ENCODE measurements at regions of chr2 and their contacts with region 1.

Region 1: GRCh38 chr2:69914170-69914960 is 544 bp upstream of the MXD1 start:
- DNase-seq: peak; percentile 99 to 100 (median 100)
- H3K4me3 ChIP-seq: peak overlapping the region; percentile 81 to 88
- H3K4me3 Mint-ChIP-seq: peak overlapping the region; percentile 85 to 89 (median 87)
- H3K27ac ChIP-seq: peak overlapping the region; percentile 96
- H3K27ac Mint-ChIP-seq: peak overlapping the region; percentile 90 to 96 (median 94)
- H3K4me1 ChIP-seq: peaks cover 30% of the 10 kb centered on the region
- H3K4me1 Mint-ChIP-seq: peaks cover 7 to 44% (median 19%) of the 10 kb centered on the region in 4 donors
- H3K27me3 ChIP-seq: no peaks in the 10 kb centered on the region
- H3K27me3 Mint-ChIP-seq: no peaks in the 10 kb centered on the region

Region 2: DNA sequence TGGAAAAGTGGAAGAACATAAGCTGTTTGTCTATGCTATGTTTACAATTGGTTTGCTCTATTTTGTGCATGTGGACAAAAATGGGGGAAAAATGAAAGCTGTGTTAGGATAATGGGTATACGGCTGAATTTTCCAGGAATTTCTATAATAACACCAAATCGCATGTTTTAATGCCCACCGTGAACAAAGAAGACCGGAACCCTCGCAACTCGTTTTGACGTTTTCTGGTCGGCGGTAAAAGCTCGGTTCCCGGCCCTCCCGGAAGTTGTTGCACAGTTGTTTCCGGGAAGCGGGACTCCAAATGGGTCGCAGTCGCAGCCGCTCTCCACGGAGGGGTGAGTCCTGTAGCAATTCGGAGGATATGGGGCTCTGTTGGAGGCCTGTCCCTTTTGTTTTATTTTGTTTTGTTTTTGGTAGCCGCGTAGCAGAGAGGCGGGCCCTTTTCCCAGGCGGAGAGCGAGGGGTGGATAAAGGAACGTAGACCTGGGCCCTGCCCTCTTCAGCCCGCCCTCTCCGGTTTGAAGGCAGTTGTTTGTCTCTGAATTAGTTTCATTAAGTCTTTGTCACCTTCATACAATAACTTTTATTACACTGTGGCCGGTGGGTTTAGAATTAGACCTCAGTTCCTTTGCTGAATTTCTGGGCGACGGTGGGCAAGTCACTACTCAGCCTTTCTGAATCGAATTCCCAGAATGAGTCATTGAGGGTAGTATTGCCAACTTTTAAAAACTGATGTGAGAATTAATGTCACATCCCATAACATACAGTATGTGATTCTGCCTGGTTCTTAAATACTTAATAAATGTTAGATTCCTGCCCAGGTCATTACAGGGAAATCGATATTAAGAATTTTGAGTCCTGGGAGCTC is 20.4 kb before region 1 on chr2 and contains the start of gene SNRNP27:
- CTCF ChIA-PET with region 1: interaction called, 5 read pairs
- POLR2A ChIA-PET with region 1: interaction called, 31 read pairs
- intact Hi-C with region 1: no loop called
- DNase-seq: peak; percentile 77 to 81 (median 80)
- H3K4me3 ChIP-seq: peak within 1 kb of the TSS; percentile 94 to 98
- H3K4me3 Mint-ChIP-seq: peak within 1 kb of the TSS; percentile 92 to 100 (median 100)
- H3K27ac ChIP-seq: peak within 1 kb of the TSS; percentile 89
- H3K27ac Mint-ChIP-seq: peak within 1 kb of the TSS; percentile 95 to 99 (median 98)
- H3K4me1 ChIP-seq: peaks cover 28% of the 10 kb centered on the region
- H3K4me1 Mint-ChIP-seq: peaks cover 22 to 53% (median 36%) of the 10 kb centered on the region in 4 donors
- H3K27me3 ChIP-seq: no peaks in the 10 kb centered on the region
- H3K27me3 Mint-ChIP-seq: no peaks in the 10 kb centered on the region
- total RNA-seq, gene SNRNP27: 44.6 to 48.5 TPM

Region 3: DNA sequence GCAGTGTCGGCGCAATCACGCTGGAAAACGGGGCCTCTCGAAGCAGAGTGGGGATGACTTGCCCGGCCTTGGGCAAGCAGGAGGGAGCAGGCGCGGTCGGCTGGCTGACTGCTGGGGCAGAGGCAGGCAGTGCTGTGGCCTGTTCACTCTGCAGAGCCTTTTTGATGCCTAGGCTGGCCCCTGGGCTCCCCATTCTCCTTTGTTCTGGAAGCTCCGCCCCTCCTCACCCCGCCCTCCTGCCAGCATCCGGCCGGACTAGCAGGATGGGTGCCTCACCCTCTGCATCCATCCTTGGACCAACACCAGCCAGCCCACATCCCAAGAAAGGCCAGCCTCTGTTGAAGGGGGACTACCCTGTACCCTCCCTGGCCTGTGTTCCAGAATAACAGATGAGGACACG is 47.1 kb after region 1 on chr2 and contains the start of gene ASPRV1:
- CTCF ChIA-PET with region 1: no interaction called
- POLR2A ChIA-PET with region 1: no interaction called
- intact Hi-C with region 1: no loop called
- DNase-seq: no peak
- H3K4me3 ChIP-seq: no peak within 1 kb of the TSS
- H3K4me3 Mint-ChIP-seq: no peak within 1 kb of the TSS
- H3K27ac ChIP-seq: no peak within 1 kb of the TSS
- H3K27ac Mint-ChIP-seq: no peak within 1 kb of the TSS
- H3K4me1 ChIP-seq: peaks cover 7% of the 10 kb centered on the region
- H3K4me1 Mint-ChIP-seq: peaks cover 0 to 16% (median 3%) of the 10 kb centered on the region in 4 donors
- H3K27me3 ChIP-seq: no peaks in the 10 kb centered on the region
- H3K27me3 Mint-ChIP-seq: peaks cover 2% of the 10 kb centered on the region in 2 donors
- total RNA-seq, gene ASPRV1: 2.0 to 2.3 TPM

Region 4: DNA sequence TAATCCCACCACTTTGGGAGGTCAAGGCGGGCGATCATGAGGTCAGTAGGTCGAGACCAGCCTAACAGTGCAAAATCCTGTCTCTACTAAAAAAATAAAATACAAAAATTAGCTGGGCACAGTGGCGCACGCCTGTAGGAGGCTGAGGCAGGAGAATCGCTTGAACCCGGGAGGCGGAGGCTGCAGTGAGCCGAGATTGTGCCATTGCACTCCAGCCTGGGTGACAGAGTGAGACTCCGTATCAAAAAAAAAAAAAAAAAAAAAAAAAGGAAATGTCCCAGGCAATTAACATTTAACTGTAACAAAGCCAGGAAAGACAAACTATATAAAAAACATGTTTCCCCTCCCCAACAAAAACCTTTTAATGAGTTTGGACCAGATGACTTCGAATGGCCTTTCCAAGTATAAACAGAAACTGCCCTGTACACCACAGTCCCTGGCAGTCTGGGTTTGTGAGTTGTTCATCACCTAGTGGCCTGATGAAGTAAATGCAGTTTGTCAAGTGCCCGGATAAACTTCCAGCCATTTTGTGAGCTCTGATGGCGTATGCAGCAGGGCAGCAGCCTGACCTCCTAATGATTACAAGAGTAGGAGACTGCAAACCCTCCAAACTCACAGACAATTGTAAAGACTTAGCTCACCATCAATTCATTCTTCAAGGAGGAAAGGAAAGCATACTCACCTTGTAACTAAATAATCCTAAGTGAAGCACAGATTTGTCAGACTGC is 156.3 kb after region 1 on chr2:
- CTCF ChIA-PET with region 1: interaction called, 81 read pairs
- POLR2A ChIA-PET with region 1: interaction called, 129 read pairs
- intact Hi-C with region 1: loop called (anchors 1 kb)
- DNase-seq: peak; percentile 75 to 81 (median 79)
- H3K4me3 ChIP-seq: peak overlapping the region in 1 of 2 donors; percentile 1
- H3K4me3 Mint-ChIP-seq: peak overlapping the region; percentile 67 to 91 (median 80)
- H3K27ac ChIP-seq: peak overlapping the region; percentile 82
- H3K27ac Mint-ChIP-seq: peak overlapping the region; percentile 81 to 99 (median 98)
- H3K4me1 ChIP-seq: peaks cover 39% of the 10 kb centered on the region
- H3K4me1 Mint-ChIP-seq: peaks cover 36 to 55% (median 46%) of the 10 kb centered on the region in 4 donors
- H3K27me3 ChIP-seq: no peaks in the 10 kb centered on the region
- H3K27me3 Mint-ChIP-seq: no peaks in the 10 kb centered on the region

Region 5: DNA sequence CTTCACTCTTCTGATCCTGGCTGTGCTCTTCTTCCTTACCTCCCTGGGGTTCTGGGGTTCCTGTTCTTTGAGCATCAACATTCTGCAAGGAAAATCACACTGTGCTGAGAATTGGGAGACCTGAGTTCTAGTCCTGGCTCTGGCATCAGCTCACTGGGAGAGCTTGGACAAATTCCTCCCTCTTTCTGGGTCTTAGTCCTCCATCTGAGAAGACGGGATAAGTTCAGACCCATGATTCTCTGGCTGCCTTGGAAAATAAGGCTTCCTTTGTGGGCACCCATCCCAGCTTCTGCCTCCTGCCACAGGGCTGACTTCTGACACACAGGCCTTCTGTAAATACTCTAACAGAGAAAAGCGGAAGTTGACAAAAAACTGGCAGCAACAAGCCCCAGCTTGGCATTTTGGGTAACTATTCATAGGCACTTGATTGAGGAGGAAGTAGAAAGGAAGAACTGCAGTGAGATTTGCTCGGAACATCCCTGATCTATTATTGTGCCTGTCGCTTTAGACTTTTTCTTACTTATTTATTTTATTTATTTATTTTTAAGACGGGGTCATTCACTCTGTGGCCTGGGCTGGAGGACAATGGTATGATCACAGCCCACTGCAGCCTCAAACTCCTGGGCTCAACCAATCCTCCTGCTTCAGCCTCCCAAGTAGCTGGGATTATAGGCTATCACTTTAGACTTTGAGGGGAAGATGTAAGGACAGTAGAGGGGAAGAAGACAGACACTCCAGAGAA is 180.8 kb after region 1 on chr2:
- CTCF ChIA-PET with region 1: interaction called, 3 read pairs
- POLR2A ChIA-PET with region 1: interaction called, 207 read pairs
- intact Hi-C with region 1: no loop called
- DNase-seq: peak; percentile 69 to 77 (median 74)
- H3K4me3 ChIP-seq: peak overlapping the region; percentile 2 to 23
- H3K4me3 Mint-ChIP-seq: peak overlapping the region; percentile 78 to 90 (median 84)
- H3K27ac ChIP-seq: peak overlapping the region; percentile 76
- H3K27ac Mint-ChIP-seq: peak overlapping the region; percentile 85 to 100 (median 97)
- H3K4me1 ChIP-seq: peaks cover 44% of the 10 kb centered on the region
- H3K4me1 Mint-ChIP-seq: peaks cover 36 to 55% (median 43%) of the 10 kb centered on the region in 4 donors
- H3K27me3 ChIP-seq: no peaks in the 10 kb centered on the region
- H3K27me3 Mint-ChIP-seq: no peaks in the 10 kb centered on the region

Region 6: GRCh38 chr2:70132244-70133126 is 218.1 kb after region 1 on chr2:
- CTCF ChIA-PET with region 1: interaction called, 9 read pairs
- POLR2A ChIA-PET with region 1: interaction called, 72 read pairs
- intact Hi-C with region 1: no loop called
- DNase-seq: peak; percentile 52 to 72 (median 63)
- H3K4me3 ChIP-seq: peak overlapping the region; percentile 24 to 55
- H3K4me3 Mint-ChIP-seq: peak overlapping the region; percentile 81 to 92 (median 86)
- H3K27ac ChIP-seq: peak overlapping the region; percentile 83
- H3K27ac Mint-ChIP-seq: peak overlapping the region; percentile 92 to 100 (median 97)
- H3K4me1 ChIP-seq: peaks cover 87% of the 10 kb centered on the region
- H3K4me1 Mint-ChIP-seq: peaks cover 54 to 88% (median 66%) of the 10 kb centered on the region in 4 donors
- H3K27me3 ChIP-seq: no peaks in the 10 kb centered on the region
- H3K27me3 Mint-ChIP-seq: no peaks in the 10 kb centered on the region

Region 7: GRCh38 chr2:70248181-70248847 is 333.9 kb after region 1 on chr2 and contains the start of gene TIA1:
- CTCF ChIA-PET with region 1: no interaction called
- POLR2A ChIA-PET with region 1: interaction called, 9 read pairs
- intact Hi-C with region 1: loop called (anchors 1 kb)
- DNase-seq: peak; percentile 95 to 99 (median 98)
- H3K4me3 ChIP-seq: peak within 1 kb of the TSS; percentile 39 to 89
- H3K4me3 Mint-ChIP-seq: peak within 1 kb of the TSS; percentile 90 to 99 (median 96)
- H3K27ac ChIP-seq: peak within 1 kb of the TSS; percentile 95
- H3K27ac Mint-ChIP-seq: peak within 1 kb of the TSS; percentile 93 to 99 (median 99)
- H3K4me1 ChIP-seq: peaks cover 39% of the 10 kb centered on the region
- H3K4me1 Mint-ChIP-seq: peaks cover 26 to 54% (median 33%) of the 10 kb centered on the region in 4 donors
- H3K27me3 ChIP-seq: no peaks in the 10 kb centered on the region
- H3K27me3 Mint-ChIP-seq: peaks cover 2 to 4% of the 10 kb centered on the region in 2 donors
- total RNA-seq, gene TIA1: 200 to 208 TPM

Region 8: DNA sequence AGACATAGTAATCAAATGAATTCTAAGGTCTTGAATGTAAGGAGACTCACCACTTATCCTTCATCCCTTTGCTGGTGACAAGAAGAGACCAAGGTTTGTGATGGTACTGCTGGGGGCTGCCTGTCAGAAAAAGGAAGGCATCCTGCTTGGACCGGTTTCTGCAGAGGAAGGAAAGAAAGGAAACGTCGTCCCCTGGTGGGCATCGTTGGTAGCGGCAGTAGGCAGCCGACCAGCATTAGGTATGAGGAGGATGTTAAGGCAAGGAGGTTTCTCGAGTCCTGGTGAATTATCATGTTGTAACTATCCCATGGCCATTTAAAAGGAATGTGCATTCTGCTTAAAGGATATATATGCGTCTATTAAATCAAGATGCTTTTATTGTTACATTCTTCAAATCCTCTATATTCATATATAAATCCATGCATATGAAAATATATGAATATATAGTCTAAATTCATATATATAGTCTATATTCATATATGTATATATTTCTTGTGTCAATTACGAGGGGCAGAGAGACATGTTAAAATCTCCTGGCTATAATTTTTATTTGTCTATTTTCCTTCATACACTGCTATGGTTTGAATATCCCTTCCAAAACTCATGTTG is 733.6 kb after region 1 on chr2:
- CTCF ChIA-PET with region 1: interaction called, 4 read pairs
- POLR2A ChIA-PET with region 1: no interaction called
- intact Hi-C with region 1: loop called (anchors 5 kb)
- DNase-seq: peak; percentile 54 to 68 (median 63)
- H3K4me3 ChIP-seq: no peak overlapping the region
- H3K4me3 Mint-ChIP-seq: no peak overlapping the region
- H3K27ac ChIP-seq: no peak overlapping the region
- H3K27ac Mint-ChIP-seq: no peak overlapping the region
- H3K4me1 ChIP-seq: no peaks in the 10 kb centered on the region
- H3K4me1 Mint-ChIP-seq: no peaks in the 10 kb centered on the region
- H3K27me3 ChIP-seq: no peaks in the 10 kb centered on the region
- H3K27me3 Mint-ChIP-seq: peaks cover 0 to 4% of the 10 kb centered on the region in 2 donors